HCT116 (cell line): ENCODE measurements at regions of chr9 and their contacts with region 1.

Region 1: GRCh38 chr9:70111042-70111602 is 67.5 kb downstream of the MAMDC2 start:
- DNase-seq: peak; percentile 66
- ATAC-seq: peak; percentile 82
- H3K4me3 ChIP-seq: no peak overlapping the region
- H3K27ac ChIP-seq: no peak overlapping the region
- H3K4me1 ChIP-seq: peaks cover 4 to 32% of the 10 kb centered on the region in 2 experiments; a peak in 3 of 4 replicates
- H3K27me3 ChIP-seq: no peaks in the 10 kb centered on the region
- CTCF ChIP-seq: peak; percentile 85 to 94 (median 93)
- POLR2A ChIP-seq: no peak
- RAD21 ChIP-seq: peak; percentile 88

Region 2: DNA sequence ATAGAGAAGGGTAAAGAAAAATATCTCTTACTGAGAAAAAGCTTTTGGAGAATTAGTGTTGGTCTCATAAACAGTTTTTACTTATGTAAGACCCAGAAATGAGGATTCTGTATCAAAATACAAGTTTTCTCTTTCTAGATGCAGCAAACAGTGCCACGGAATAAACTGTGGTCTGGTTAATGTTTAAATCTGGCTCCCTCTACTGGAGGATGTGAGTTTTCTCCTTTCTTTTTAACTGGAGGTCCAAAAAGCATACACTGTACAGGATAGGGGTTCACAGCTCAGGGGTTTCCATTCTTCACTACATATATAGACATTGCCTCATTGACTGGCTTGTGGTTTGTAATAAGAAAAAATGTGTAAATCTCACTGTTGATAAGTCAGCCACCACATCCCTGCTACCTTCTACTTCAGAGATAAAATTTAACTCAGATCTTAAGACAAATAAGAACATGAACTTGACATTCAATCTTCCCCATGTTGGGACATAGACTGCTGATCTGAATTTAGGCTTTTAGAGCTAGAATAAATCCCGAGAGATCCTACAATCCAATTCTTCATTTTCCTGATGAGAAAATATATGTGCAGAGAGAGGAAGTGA is 191.6 kb before region 1 on chr9:
- CTCF ChIA-PET with region 1: interaction called, 12 read pairs
- POLR2A ChIA-PET with region 1: no interaction called
- RAD21 ChIA-PET with region 1: interaction called in 1 of 2 experiments, 3 read pairs
- intact Hi-C with region 1: no loop called
- DNase-seq: peak; percentile 29
- ATAC-seq: peak; percentile 89
- H3K4me3 ChIP-seq: no peak overlapping the region
- H3K27ac ChIP-seq: no peak overlapping the region
- H3K4me1 ChIP-seq: no peaks in the 10 kb centered on the region
- H3K27me3 ChIP-seq: peaks cover 20% of the 10 kb centered on the region
- CTCF ChIP-seq: peak; percentile 60 to 72 (median 63); a peak in 5 of 6 replicates
- POLR2A ChIP-seq: no peak
- RAD21 ChIP-seq: peak; percentile 73

Region 3: GRCh38 chr9:70218767-70219166 is 107.6 kb after region 1 on chr9:
- CTCF ChIA-PET with region 1: no interaction called
- POLR2A ChIA-PET with region 1: no interaction called
- RAD21 ChIA-PET with region 1: no interaction called
- intact Hi-C with region 1: no loop called
- DNase-seq: no peak
- ATAC-seq: no peak
- H3K4me3 ChIP-seq: no peak overlapping the region
- H3K27ac ChIP-seq: no peak overlapping the region
- H3K4me1 ChIP-seq: no peaks in the 10 kb centered on the region
- H3K27me3 ChIP-seq: no peaks in the 10 kb centered on the region
- CTCF ChIP-seq: no peak
- POLR2A ChIP-seq: no peak
- RAD21 ChIP-seq: no peak

Region 4: DNA sequence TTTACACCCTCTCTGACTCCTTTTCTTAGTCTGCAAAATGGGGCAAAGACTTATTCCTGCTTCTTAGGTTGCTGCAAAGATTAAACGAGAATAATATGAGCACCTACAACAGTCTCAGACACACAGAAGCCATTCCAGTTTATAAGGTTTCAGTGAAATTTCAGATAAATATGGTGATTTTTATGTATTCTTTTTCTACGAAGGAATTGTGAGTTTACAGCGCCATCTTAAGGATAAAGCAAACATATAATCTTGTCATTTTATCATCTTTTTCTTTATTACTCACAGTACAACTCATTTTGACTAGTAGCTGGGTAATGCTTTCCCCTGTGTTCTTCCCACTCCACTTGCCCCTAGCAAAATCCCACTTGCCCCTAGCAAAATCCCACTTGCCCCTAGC is 118.5 kb after region 1 on chr9:
- CTCF ChIA-PET with region 1: interaction called, 6 read pairs
- POLR2A ChIA-PET with region 1: no interaction called
- RAD21 ChIA-PET with region 1: no interaction called
- intact Hi-C with region 1: loop called (anchors 5 kb)
- DNase-seq: peak; percentile 18
- ATAC-seq: peak; percentile 42; the same call in 1 of the 2 replicates
- H3K4me3 ChIP-seq: no peak overlapping the region
- H3K27ac ChIP-seq: no peak overlapping the region
- H3K4me1 ChIP-seq: no peaks in the 10 kb centered on the region
- H3K27me3 ChIP-seq: no peaks in the 10 kb centered on the region
- CTCF ChIP-seq: peak in 2 of 3 experiments; percentile 44 to 55; a peak in 3 of 6 replicates
- POLR2A ChIP-seq: no peak
- RAD21 ChIP-seq: peak; percentile 72

Region 5: GRCh38 chr9:70278312-70278711 is 167.2 kb after region 1 on chr9:
- CTCF ChIA-PET with region 1: no interaction called
- POLR2A ChIA-PET with region 1: no interaction called
- RAD21 ChIA-PET with region 1: no interaction called
- intact Hi-C with region 1: no loop called
- DNase-seq: no peak
- ATAC-seq: no peak
- H3K4me3 ChIP-seq: no peak overlapping the region
- H3K27ac ChIP-seq: no peak overlapping the region
- H3K4me1 ChIP-seq: no peaks in the 10 kb centered on the region
- H3K27me3 ChIP-seq: no peaks in the 10 kb centered on the region
- CTCF ChIP-seq: no peak
- POLR2A ChIP-seq: no peak
- RAD21 ChIP-seq: no peak

Region 6: DNA sequence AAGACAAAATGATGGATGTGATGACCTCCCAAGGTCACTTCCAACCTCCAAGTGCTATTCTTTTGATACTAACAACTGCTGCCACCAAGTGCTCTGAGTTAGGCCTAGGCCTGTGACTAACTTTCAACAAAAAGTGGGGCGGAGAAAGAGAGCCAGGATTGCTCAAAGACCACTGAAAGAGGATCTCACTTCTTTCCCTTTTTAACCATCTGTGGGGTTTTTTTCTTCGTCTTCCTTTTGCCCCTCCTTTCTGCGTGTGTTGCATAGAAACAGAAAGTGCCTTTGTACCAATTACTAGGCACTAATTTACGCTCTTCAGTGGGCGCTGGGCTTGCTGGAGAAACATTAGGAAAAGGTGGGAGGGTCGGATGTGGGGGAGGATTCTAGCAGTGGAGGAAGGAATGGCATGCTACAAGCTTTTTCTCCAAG is 295.3 kb after region 1 on chr9:
- CTCF ChIA-PET with region 1: no interaction called
- POLR2A ChIA-PET with region 1: no interaction called
- RAD21 ChIA-PET with region 1: no interaction called
- intact Hi-C with region 1: no loop called
- DNase-seq: no peak
- ATAC-seq: no peak
- H3K4me3 ChIP-seq: no peak overlapping the region
- H3K27ac ChIP-seq: no peak overlapping the region
- H3K4me1 ChIP-seq: peaks cover 5 to 23% of the 10 kb centered on the region in 2 experiments; a peak in 2 of 4 replicates
- H3K27me3 ChIP-seq: no peaks in the 10 kb centered on the region
- CTCF ChIP-seq: no peak
- POLR2A ChIP-seq: no peak
- RAD21 ChIP-seq: no peak; the same call in 1 of the 2 replicates

Region 7: DNA sequence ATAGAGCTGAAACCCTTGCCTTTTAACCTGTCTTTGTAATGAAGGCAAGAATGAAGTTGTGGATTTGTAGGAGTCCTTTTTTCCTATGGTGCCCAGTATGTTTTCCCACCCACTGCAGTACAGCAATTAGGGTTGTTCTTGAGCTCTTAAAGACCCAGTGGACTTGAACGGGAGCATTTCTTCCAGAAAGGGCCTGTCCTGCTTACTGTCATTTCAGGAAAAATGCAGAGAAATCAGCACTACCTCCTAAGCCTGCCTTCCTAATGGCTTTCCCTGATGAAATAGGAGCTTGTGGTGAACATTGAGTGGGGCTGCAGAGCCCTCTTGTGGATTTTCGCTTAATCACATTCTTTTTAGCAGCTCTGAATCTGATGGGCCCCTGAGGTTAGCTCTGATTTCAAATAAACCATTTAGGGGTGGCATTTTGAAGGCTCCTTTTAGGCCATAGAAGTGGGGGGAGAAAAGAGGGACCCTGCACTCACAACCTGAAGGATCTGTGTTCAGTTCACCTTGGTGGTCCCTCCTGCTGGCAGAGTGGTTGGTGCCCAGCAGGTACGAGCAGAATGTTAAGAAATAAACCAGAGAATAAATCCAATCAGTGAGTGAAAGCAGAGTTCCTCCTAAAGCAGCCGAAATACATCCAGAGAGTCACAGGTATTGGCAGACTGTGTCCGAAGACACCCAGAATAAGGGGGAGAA is 491.3 kb after region 1 on chr9:
- CTCF ChIA-PET with region 1: interaction called, 29 read pairs
- POLR2A ChIA-PET with region 1: no interaction called
- RAD21 ChIA-PET with region 1: interaction called, 3 to 4 read pairs
- intact Hi-C with region 1: loop called (anchors 2 kb)
- DNase-seq: peak; percentile 65
- ATAC-seq: peak; percentile 98
- H3K4me3 ChIP-seq: no peak overlapping the region
- H3K27ac ChIP-seq: no peak overlapping the region
- H3K4me1 ChIP-seq: no peaks in the 10 kb centered on the region
- H3K27me3 ChIP-seq: no peaks in the 10 kb centered on the region
- CTCF ChIP-seq: peak; percentile 62 to 83 (median 73); a peak in 5 of 6 replicates
- POLR2A ChIP-seq: no peak
- RAD21 ChIP-seq: peak; percentile 92